ENCODE measurements at regions of chr13 and their contacts with region 1.

Region 1: DNA sequence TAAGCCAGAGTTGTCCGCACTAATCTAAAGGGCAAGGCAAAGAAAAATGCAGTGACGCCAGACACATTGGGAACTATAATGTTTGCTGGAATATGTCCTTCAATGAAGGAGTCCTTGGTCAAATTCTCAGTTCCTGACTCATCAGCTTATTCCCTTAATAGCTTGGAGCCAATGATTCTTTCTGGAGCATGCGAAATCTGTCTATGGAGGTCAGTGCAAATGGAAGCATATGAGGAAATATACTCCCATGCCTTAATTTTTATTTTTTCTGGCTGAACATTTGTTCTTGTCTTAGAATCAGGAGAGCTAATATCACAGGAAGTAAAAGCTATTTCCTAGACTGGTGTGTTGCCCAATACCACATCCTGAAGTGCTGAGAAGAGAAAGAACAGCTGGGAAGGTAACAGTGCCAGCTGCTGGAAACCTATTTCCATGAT is 289.8 kb upstream of the SPRY2 start:
- DNase-seq: no peak
- H3K4me3 ChIP-seq: no peak overlapping the region
- H3K27ac ChIP-seq: no peak overlapping the region
- H3K4me1 ChIP-seq: no peaks in the 10 kb centered on the region
- H3K27me3 ChIP-seq: no peaks in the 10 kb centered on the region
- CTCF ChIP-seq: no peak

Region 2: GRCh38 chr13:80469853-80470381 is 160.8 kb before region 1 on chr13:
- intact Hi-C with region 1: loop called (anchors 5 kb)
- DNase-seq: peak; percentile 62 to 93
- H3K4me3 ChIP-seq: peak overlapping the region in 1 of 2 donors; percentile 14
- H3K27ac ChIP-seq: peak overlapping the region; percentile 85 to 91
- H3K4me1 ChIP-seq: peaks cover 11 to 24% of the 10 kb centered on the region in 2 donors
- H3K27me3 ChIP-seq: no peaks in the 10 kb centered on the region
- CTCF ChIP-seq: no peak

Region 3: GRCh38 chr13:80562433-80563156 is 68.1 kb before region 1 on chr13:
- intact Hi-C with region 1: no loop called
- DNase-seq: no peak
- H3K4me3 ChIP-seq: no peak overlapping the region
- H3K27ac ChIP-seq: no peak overlapping the region
- H3K4me1 ChIP-seq: no peaks in the 10 kb centered on the region
- H3K27me3 ChIP-seq: no peaks in the 10 kb centered on the region
- CTCF ChIP-seq: no peak

Measured in ascending aorta (tissue), 2 donors.